ENCODE measurements at regions of chr2 and their contacts with region 1.

Region 1: DNA sequence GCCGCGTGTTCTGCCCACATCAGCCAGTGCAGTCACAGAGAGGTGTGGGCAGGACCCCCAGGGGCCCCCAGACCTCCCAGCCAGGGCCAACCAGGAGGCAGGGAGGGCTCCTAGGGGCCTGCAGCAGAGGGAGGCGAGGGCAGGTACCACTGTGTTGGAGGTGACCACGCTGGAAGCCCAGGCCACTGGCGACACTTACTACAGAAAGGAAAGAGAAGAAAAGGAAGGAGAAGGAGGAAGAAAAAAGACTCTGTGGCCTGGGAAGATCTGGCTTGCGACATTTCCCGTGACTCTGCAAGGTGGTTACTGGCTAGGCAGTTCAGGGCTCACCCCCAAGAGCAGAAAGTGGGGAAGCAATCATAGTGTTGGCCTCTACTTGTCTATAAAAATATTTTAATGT is 98.1 kb upstream of the BCL2L11 start:
- DNase-seq: no peak
- H3K4me3 ChIP-seq: no peak overlapping the region
- H3K27ac ChIP-seq: no peak overlapping the region
- H3K4me1 ChIP-seq: no peaks in the 10 kb centered on the region
- H3K27me3 ChIP-seq: no peaks in the 10 kb centered on the region
- CTCF ChIP-seq: no peak
- POLR2A ChIP-seq: no peak

Region 2: GRCh38 chr2:110788976-110789375 is 233.7 kb before region 1 on chr2:
- intact Hi-C with region 1: loop called (anchors 5 kb)
- DNase-seq: no peak
- H3K4me3 ChIP-seq: no peak overlapping the region
- H3K27ac ChIP-seq: no peak overlapping the region
- H3K4me1 ChIP-seq: no peaks in the 10 kb centered on the region
- H3K27me3 ChIP-seq: no peaks in the 10 kb centered on the region
- CTCF ChIP-seq: no peak
- POLR2A ChIP-seq: no peak